ENCODE measurements at regions of chr22 and their contacts with region 1.

Region 1: DNA sequence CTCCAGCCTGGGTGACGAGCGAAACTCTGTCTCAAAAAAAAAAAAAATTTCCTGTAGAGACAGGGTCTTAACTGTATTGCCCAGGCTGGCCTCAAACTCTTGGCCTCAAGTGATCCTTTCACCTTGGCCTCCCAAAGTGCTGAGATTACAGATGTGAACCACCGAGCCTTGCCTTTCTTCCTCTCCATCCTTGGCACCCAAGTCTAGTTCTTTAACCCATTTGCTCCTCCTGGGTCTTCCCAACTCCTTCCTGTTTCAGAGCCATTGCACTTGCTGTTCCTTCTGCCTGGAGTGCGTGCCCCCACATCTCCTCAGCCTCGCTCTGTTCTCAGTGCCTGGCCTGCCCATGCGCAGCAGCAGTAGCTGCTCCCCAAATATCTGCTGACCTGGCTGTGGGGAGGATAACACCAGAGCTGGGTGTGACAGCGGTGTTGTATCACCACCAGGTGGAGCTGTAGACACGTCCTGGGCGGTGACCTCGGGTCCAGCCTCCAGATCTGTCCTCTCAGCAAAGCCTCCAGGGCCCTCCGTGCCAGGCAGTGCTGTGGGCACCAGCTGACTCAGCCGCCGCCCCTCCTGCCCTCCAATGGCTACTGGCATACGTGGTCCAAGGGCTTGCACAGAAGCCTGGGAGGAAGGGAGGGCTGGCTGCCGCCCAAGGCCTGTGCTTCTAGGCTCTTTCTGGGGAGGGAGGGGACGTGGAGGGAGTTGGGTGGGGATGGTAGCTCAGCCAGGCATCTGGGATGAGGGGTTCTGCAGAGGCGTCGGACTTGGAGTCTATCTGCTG is 22.0 kb downstream of the TEF start:
- DNase-seq: peak; percentile 81 to 84 (median 84)
- H3K4me3 ChIP-seq: no peak overlapping the region
- H3K4me3 Mint-ChIP-seq: no peak overlapping the region
- H3K27ac ChIP-seq: no peak overlapping the region
- H3K27ac Mint-ChIP-seq: peak overlapping the region; percentile 7 to 89 (median 67)
- H3K4me1 ChIP-seq: peaks cover 12% of the 10 kb centered on the region
- H3K4me1 Mint-ChIP-seq: peaks cover 3 to 7% (median 6%) of the 10 kb centered on the region in 4 donors
- H3K27me3 ChIP-seq: no peaks in the 10 kb centered on the region
- H3K27me3 Mint-ChIP-seq: no peaks in the 10 kb centered on the region

Region 2: DNA sequence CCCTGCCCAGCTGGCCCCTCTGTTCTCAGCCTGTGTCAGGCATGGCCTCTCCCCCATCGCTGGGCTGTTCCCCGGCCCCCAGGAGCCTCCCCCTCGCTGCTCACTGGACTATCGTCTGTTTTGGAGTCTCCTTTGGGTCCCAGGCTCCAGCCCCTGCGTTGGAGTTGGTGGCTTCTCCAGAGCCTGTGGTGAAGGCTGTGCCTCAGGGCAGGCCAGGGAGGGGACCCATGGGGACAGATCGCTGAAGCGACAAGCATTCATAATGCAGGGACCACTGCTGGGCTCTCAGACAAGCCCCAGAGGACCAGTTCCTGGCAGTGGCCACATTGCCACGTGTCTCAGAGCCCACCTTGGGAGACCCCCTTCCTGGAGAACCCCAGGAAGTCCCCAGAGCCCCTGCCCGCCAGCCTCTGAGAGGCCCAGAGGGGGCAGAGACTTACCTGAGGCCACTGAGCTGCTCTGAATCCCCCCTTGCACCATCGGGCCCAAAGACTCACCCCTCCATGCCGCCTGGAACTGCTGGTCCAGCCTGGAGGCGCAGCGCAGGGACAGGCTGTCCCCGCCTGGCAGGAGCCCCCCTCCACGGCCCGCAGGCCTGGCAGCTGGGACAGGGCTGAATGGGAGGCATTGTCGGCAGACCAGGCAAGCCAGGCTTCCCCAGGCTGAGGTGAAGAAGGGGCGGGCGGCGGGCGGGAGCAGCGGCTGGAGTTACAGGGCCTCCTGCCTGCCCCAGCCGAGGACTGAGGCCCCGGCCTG is 163.2 kb before region 1 on chr22 and contains the start of gene CHADL:
- CTCF ChIA-PET with region 1: no interaction called
- POLR2A ChIA-PET with region 1: no interaction called
- intact Hi-C with region 1: no loop called
- DNase-seq: no peak
- H3K4me3 ChIP-seq: no peak within 1 kb of the TSS
- H3K4me3 Mint-ChIP-seq: peak within 1 kb of the TSS in 2 of 8 donors; percentile 33 to 46
- H3K27ac ChIP-seq: no peak within 1 kb of the TSS
- H3K27ac Mint-ChIP-seq: peak within 1 kb of the TSS in 3 of 7 donors; percentile 32 to 83 (median 80)
- H3K4me1 ChIP-seq: peaks cover 13% of the 10 kb centered on the region
- H3K4me1 Mint-ChIP-seq: peaks cover 4 to 14% (median 6%) of the 10 kb centered on the region in 4 donors
- H3K27me3 ChIP-seq: no peaks in the 10 kb centered on the region
- H3K27me3 Mint-ChIP-seq: no peaks in the 10 kb centered on the region
- total RNA-seq, gene CHADL: 0.67 to 1.0 TPM

Region 3: DNA sequence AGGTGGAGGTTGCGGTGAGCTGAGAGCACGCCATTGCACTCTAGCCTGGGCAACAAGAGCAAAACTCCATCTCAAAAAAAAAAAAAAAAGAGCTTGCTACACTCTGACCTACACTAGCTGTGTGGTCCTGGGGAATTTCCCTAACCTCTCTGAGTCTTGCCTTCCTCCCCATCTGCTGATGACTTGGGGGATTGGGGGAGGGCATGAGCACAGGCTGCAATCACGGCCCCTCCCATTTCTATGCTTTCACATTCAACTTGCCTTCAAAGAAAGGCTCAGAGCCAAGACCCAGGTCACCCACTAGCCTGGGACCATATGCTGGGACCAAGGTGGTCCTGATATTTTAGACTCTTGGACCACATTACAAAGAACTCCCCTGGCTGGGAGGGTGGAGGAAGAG is 61.7 kb before region 1 on chr22:
- CTCF ChIA-PET with region 1: no interaction called
- POLR2A ChIA-PET with region 1: no interaction called
- intact Hi-C with region 1: no loop called
- DNase-seq: no peak
- H3K4me3 ChIP-seq: no peak overlapping the region
- H3K4me3 Mint-ChIP-seq: no peak overlapping the region
- H3K27ac ChIP-seq: no peak overlapping the region
- H3K27ac Mint-ChIP-seq: peak overlapping the region in 3 of 7 donors; percentile 42 to 47 (median 43)
- H3K4me1 ChIP-seq: no peaks in the 10 kb centered on the region
- H3K4me1 Mint-ChIP-seq: no peaks in the 10 kb centered on the region
- H3K27me3 ChIP-seq: no peaks in the 10 kb centered on the region
- H3K27me3 Mint-ChIP-seq: no peaks in the 10 kb centered on the region

Region 4: GRCh38 chr22:41417622-41418390 is 14.1 kb after region 1 on chr22:
- CTCF ChIA-PET with region 1: interaction called, 11 read pairs
- POLR2A ChIA-PET with region 1: no interaction called
- intact Hi-C with region 1: no loop called
- DNase-seq: no peak
- H3K4me3 ChIP-seq: no peak overlapping the region
- H3K4me3 Mint-ChIP-seq: peak overlapping the region in 1 of 8 donors; percentile 36
- H3K27ac ChIP-seq: no peak overlapping the region
- H3K27ac Mint-ChIP-seq: peak overlapping the region in 1 of 7 donors; percentile 61
- H3K4me1 ChIP-seq: peaks cover 26% of the 10 kb centered on the region
- H3K4me1 Mint-ChIP-seq: peaks cover 9 to 32% (median 18%) of the 10 kb centered on the region in 4 donors
- H3K27me3 ChIP-seq: no peaks in the 10 kb centered on the region
- H3K27me3 Mint-ChIP-seq: no peaks in the 10 kb centered on the region

Region 5: GRCh38 chr22:41448189-41448808 is 44.6 kb after region 1 on chr22:
- CTCF ChIA-PET with region 1: interaction called, 9 read pairs
- POLR2A ChIA-PET with region 1: interaction called, 19 read pairs
- intact Hi-C with region 1: no loop called
- DNase-seq: peak; percentile 91 to 97 (median 93)
- H3K4me3 ChIP-seq: peak overlapping the region; percentile 71 to 94
- H3K4me3 Mint-ChIP-seq: peak overlapping the region; percentile 90 to 98 (median 96)
- H3K27ac ChIP-seq: peak overlapping the region; percentile 87
- H3K27ac Mint-ChIP-seq: peak overlapping the region; percentile 94 to 99 (median 98)
- H3K4me1 ChIP-seq: peaks cover 11% of the 10 kb centered on the region
- H3K4me1 Mint-ChIP-seq: peaks cover 12 to 46% (median 19%) of the 10 kb centered on the region in 4 donors
- H3K27me3 ChIP-seq: no peaks in the 10 kb centered on the region
- H3K27me3 Mint-ChIP-seq: peaks cover 0 to 2% of the 10 kb centered on the region in 2 donors

Region 6: GRCh38 chr22:41468381-41469217 is 64.9 kb after region 1 on chr22 and contains the starts of genes ACO2 and PHF5A:
- CTCF ChIA-PET with region 1: interaction called, 15 read pairs
- POLR2A ChIA-PET with region 1: interaction called, 13 read pairs
- intact Hi-C with region 1: no loop called
- DNase-seq: peak; percentile 98
- H3K4me3 ChIP-seq: peak within 1 kb of the TSS; percentile 67 to 90
- H3K4me3 Mint-ChIP-seq: peak within 1 kb of the TSS; percentile 86 to 95 (median 92)
- H3K27ac ChIP-seq: peak within 1 kb of the TSS; percentile 89
- H3K27ac Mint-ChIP-seq: peak within 1 kb of the TSS; percentile 96 to 100 (median 99)
- H3K4me1 ChIP-seq: peaks cover 28% of the 10 kb centered on the region
- H3K4me1 Mint-ChIP-seq: peaks cover 29 to 56% (median 44%) of the 10 kb centered on the region in 4 donors
- H3K27me3 ChIP-seq: no peaks in the 10 kb centered on the region
- H3K27me3 Mint-ChIP-seq: no peaks in the 10 kb centered on the region
- total RNA-seq, gene ACO2: 64.8 to 65.0 TPM
- total RNA-seq, gene PHF5A: 37.7 to 39.2 TPM

Region 7: GRCh38 chr22:41501209-41501608 is 97.5 kb after region 1 on chr22:
- CTCF ChIA-PET with region 1: interaction called, 31 read pairs
- POLR2A ChIA-PET with region 1: no interaction called
- intact Hi-C with region 1: loop called (anchors 1 kb)
- DNase-seq: peak in 1 of 5 donors; percentile 10
- H3K4me3 ChIP-seq: no peak overlapping the region
- H3K4me3 Mint-ChIP-seq: no peak overlapping the region
- H3K27ac ChIP-seq: no peak overlapping the region
- H3K27ac Mint-ChIP-seq: peak overlapping the region in 1 of 7 donors; percentile 37
- H3K4me1 ChIP-seq: no peaks in the 10 kb centered on the region
- H3K4me1 Mint-ChIP-seq: peaks cover 0 to 7% (median 0%) of the 10 kb centered on the region in 4 donors
- H3K27me3 ChIP-seq: no peaks in the 10 kb centered on the region
- H3K27me3 Mint-ChIP-seq: no peaks in the 10 kb centered on the region

Region 8: DNA sequence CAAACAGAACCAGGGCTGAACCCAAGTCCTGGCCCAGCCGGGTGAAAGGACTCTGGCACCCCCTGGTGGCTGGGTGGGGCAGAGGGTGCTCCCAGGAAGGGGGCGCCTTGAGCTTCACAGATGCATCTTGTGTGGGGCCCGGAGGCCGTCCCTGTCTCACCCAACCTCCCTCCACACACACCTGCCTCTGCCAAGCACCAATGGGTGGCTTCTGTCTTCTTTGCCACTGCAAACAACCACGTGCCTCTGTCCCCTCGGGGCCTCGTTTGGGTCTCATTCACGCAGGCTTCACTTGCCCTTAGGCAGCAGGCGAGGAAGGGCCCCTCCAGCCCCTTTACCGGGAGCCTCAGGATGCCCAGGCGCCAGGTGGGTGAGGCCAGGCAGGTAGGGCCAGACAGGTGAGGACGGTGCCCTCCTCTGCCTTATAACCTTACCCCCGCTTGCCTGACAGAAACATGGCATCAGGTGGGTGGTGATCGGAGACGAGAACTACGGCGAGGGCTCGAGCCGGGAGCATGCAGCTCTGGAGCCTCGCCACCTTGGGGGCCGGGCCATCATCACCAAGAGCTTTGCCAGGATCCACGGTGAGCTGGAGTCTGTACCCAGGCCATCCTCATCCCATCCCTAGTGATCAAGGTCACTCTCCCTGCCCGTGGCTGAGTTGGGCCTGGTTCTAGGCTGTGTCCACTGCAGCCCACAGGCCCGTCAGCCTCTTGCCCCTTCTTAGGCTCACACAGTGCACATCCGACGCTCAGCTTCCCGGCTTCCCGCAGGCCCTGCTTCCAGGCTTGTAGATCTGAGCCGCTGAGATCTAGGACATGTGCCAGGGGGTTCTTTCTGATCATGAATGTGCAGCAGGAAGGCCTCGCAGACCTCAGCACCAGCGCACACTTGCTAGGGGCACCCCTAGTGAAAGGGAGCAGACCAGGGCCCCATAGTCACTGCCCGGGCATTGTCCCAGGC is 123.4 kb after region 1 on chr22:
- CTCF ChIA-PET with region 1: interaction called, 124 read pairs
- POLR2A ChIA-PET with region 1: interaction called, 34 read pairs
- intact Hi-C with region 1: loop called (anchors 1 kb)
- DNase-seq: peak; percentile 61 to 71 (median 62)
- H3K4me3 ChIP-seq: no peak overlapping the region
- H3K4me3 Mint-ChIP-seq: no peak overlapping the region
- H3K27ac ChIP-seq: peak overlapping the region; percentile 12
- H3K27ac Mint-ChIP-seq: peak overlapping the region; percentile 43 to 85 (median 72)
- H3K4me1 ChIP-seq: peaks cover 15% of the 10 kb centered on the region
- H3K4me1 Mint-ChIP-seq: peaks cover 4 to 25% (median 12%) of the 10 kb centered on the region in 4 donors
- H3K27me3 ChIP-seq: no peaks in the 10 kb centered on the region
- H3K27me3 Mint-ChIP-seq: no peaks in the 10 kb centered on the region

Region 9: DNA sequence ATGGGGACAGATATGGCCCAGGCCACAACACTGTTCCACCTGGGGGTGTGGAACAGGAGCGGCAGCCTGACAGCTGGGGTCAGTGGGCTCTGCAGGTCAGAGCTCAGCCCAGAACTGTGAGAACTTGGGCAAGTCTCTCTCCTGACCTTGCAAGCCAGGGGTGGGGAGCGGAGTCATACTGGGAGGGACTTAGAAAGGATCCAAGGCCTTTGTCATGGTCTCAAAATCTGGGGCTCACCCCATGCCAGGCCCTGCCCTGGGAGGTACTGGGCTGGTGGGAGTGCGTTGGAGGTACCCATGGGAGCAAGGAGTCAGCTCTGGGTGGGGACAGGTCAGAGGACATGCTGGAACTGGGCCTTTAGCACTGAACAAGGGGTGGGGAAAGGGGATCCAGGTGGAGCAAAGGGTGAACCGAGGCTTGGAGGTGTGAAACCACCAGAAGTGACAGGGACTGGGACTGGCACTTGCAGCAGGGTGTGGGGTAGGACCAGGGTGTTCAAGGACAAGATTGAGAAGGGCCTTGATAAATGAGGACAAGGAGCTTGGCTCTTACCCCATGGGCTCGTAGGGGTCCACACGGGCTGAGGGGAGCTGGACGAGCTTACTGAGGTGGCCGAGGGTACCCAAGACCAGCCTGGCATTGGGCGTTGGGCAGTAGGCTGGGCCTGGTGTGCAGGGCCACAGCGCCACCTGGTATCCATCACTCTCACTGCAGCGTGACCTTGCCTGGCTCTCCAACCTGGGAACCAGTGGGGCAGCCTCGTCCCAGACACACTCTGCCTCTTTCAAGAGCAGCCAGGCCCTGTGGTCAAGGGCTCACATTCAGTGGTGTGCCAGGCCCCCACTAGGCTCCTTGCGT is 193.3 kb after region 1 on chr22:
- CTCF ChIA-PET with region 1: interaction called, 4 read pairs
- POLR2A ChIA-PET with region 1: no interaction called
- intact Hi-C with region 1: loop called (anchors 5 kb)
- DNase-seq: peak in 3 of 5 donors; percentile 14 to 31 (median 19)
- H3K4me3 ChIP-seq: no peak overlapping the region
- H3K4me3 Mint-ChIP-seq: no peak overlapping the region
- H3K27ac ChIP-seq: no peak overlapping the region
- H3K27ac Mint-ChIP-seq: peak overlapping the region in 1 of 7 donors; percentile 37
- H3K4me1 ChIP-seq: no peaks in the 10 kb centered on the region
- H3K4me1 Mint-ChIP-seq: no peaks in the 10 kb centered on the region
- H3K27me3 ChIP-seq: no peaks in the 10 kb centered on the region
- H3K27me3 Mint-ChIP-seq: no peaks in the 10 kb centered on the region